AG04450 (cell line): ENCODE measurements at regions of chr4 and their contacts with region 1.

Region 1: GRCh38 chr4:17544205-17544604 is 29.2 kb downstream of the CLRN2 start:
- DNase-seq: no peak
- H3K4me3 ChIP-seq: no peak overlapping the region
- H3K27ac ChIP-seq: no peak overlapping the region
- H3K27me3 ChIP-seq: peaks cover 3% of the 10 kb centered on the region
- CTCF ChIP-seq: no peak

Region 2: DNA sequence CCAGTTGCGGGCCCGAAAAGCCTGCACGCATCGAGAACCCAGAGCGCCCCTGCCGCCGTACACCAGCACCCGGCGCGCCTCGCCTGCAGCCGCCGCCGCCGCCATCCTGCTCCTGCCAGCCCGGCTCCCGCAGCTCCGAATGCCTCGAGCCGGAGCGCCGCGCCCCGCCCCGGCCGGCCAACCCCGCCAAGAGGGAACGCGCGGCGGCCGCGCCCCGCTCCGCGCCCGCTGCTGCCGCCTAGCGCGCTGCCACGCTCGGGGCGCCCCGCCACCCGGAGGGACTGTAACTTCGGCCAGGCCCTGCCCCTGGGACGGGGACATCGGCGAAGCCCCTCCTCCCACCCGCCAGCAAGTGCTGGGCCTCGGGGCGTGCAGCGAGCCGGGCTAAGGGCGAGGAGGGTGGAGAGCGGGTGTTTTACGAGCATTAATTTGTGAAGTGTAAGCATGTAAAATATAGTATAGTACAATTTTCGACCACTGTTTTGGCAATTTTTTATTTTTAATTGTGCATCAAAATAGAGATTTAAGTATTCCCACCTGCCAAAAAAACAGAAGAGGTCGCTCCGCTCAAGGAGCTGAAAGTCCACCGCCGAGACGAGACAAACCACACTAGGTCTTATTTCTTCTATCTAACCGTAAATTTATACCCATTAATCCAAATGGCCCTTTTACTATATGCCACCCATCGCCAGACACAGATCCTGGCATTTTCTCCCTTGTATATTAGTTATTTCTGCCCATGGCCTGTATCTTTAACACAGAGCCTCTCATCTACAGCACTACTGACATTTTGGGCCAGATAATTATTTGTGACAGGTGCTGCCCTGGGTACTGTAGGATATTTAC is 32.0 kb before region 1 on chr4 and contains the start of gene QDPR:
- CTCF ChIA-PET with region 1: interaction called, 13 read pairs
- POLR2A ChIA-PET with region 1: no interaction called
- DNase-seq: no peak
- H3K4me3 ChIP-seq: peak within 1 kb of the TSS; percentile 74
- H3K27ac ChIP-seq: peak within 1 kb of the TSS; percentile 34
- H3K27me3 ChIP-seq: peaks cover 16% of the 10 kb centered on the region
- CTCF ChIP-seq: 0 out of 2 replicates have a peak, but pooled peaks have one; percentile 9
- polyA plus RNA-seq, gene QDPR: 31.4 and 36.4 TPM in 2 replicates

Region 3: DNA sequence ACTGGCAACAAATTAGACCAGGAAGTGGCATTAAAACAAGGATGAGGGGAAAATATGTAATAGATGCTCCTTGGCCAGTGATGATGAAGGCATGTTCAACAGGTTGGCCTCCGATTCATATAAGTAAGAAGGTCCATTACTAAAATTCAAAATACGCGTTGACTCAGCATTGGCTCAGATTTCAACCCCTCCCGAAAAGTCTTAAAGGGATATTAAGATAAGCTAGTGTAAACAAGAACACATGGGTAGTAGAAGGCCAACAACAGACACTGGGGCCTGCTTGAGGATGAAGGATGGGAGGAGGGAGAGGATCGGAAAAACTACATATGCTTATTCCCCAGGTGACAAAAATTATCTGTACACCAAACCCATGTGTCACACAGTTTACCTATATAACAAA is 13.7 kb after region 1 on chr4:
- CTCF ChIA-PET with region 1: interaction called, 20 read pairs
- POLR2A ChIA-PET with region 1: no interaction called
- DNase-seq: no peak
- H3K4me3 ChIP-seq: no peak overlapping the region
- H3K27ac ChIP-seq: no peak overlapping the region
- H3K27me3 ChIP-seq: peaks cover 5% of the 10 kb centered on the region
- CTCF ChIP-seq: no peak

Region 4: DNA sequence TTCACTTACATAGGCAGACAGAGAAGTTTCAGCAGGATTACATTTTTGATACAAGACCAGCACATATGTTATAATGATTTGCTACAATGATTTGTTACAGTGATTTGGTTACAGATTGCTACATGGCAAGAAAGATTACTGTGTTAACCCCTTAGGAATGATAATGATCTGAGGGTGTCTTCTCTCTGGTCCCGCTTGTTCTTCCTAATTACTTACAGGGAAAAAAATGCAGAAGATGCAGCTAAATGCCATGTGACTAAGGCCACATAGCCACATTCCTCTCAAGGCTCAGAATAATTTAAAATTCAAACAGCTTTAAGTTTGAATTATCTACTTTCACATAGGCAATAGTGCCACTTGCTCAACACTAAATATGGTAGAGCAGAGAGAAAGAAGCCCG is 23.1 kb after region 1 on chr4:
- CTCF ChIA-PET with region 1: interaction called, 20 read pairs
- POLR2A ChIA-PET with region 1: no interaction called
- DNase-seq: no peak
- H3K4me3 ChIP-seq: no peak overlapping the region
- H3K27ac ChIP-seq: no peak overlapping the region
- H3K27me3 ChIP-seq: no peaks in the 10 kb centered on the region
- CTCF ChIP-seq: no peak

Region 5: GRCh38 chr4:17636696-17637622 is 92.8 kb after region 1 on chr4:
- CTCF ChIA-PET with region 1: interaction called, 42 read pairs
- POLR2A ChIA-PET with region 1: no interaction called
- DNase-seq: peak; percentile 37
- H3K4me3 ChIP-seq: no peak overlapping the region
- H3K27ac ChIP-seq: no peak overlapping the region
- H3K27me3 ChIP-seq: no peaks in the 10 kb centered on the region
- CTCF ChIP-seq: peak; percentile 88

Region 6: DNA sequence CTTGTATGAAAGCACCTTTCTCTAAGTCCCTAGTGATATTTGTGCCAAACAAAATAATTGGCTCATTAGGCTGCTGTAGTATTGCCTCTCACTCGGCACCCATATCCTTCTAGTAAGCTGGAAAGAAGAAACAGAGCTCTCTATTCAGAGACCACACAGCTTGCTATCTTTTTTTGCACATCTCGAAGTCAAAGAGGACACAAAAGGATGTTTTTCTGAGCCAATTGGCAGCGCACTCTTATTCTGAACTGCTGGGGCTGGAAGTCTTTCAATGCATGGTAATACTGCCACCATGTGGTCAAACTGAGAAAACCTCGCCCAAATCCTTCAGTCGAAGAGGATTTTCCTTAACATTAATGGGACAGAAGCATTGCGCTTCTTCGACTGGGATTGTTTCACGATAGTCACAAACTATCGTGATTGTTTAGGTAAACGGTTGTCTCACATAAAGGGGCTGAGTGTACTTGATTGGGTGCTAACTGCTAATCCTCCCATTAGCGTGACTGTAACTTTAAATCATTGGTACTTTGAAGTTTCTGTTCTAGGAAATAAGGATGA is 1049.3 kb after region 1 on chr4:
- CTCF ChIA-PET with region 1: interaction called, 51 read pairs
- POLR2A ChIA-PET with region 1: no interaction called
- DNase-seq: peak; percentile 49
- H3K4me3 ChIP-seq: peak overlapping the region; percentile 46
- H3K27ac ChIP-seq: no peak overlapping the region
- H3K27me3 ChIP-seq: no peaks in the 10 kb centered on the region
- CTCF ChIP-seq: peak; percentile 87